AG04449 (cell line): ENCODE measurements at regions of chr6 and their contacts with region 1.

Region 1: DNA sequence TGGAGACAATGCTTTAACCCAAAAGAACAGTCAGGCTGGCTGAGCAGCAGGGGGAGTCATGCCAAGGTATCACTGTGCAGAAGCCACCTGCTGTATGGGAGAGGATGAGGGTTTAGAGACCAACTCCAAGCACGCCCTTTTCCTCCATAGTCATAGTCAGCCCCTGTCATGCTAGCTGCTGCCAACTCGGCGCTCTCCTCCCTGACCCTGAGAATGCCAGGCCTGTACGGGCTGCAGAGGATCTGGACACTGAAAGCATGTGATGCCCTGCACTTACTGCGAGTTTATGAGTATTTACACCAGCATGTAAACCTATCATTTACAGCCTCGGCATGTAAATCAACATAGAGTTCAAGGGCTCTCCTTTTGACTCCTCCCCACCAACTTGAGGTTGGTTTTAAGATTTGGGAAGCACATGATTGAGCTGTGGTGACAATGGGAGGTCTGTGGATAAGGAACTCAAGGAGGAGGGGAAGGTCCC is 11.7 kb upstream of the SCUBE3 start:
- DNase-seq: no peak
- H3K4me3 ChIP-seq: no peak overlapping the region
- CTCF ChIP-seq: no peak

Region 2: DNA sequence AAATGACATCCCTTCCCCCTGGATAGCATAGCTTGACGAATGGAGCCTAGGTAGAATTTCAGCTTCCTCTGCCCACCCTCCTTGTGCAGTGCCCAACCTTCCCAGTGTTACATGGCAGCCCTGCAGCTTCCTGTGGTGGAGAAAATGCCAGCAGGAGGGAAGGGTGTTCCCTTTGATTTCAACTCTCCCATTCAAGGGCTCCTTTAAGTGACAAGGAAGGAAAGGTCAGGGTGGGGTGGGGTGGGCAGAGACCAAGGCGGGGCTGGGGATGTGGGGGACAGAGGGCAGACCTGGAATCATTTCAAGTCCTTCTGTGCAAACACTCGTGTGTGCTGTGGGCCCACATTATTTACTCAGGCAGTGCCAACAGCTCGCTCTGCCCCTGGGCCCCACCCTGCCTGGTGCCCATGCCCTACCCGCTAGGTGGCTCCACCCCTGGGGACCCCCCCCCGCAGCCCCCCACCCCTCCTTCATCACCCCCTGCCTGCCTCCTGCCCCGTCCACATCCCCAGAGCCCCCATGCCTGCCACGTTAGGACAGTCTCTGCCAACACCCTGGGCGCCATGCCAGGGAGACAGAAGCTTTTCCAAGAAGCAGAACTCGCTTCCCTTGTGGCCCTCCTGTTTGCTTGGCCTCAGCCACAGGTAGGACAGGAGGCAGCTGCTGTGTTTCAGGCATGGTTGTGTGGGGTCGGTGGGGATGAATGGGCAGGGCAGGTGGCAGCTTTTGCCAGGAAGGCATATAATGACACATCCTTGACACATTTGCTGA is 655.4 kb before region 1 on chr6:
- CTCF ChIA-PET with region 1: no interaction called
- POLR2A ChIA-PET with region 1: no interaction called
- DNase-seq: no peak
- H3K4me3 ChIP-seq: no peak overlapping the region
- CTCF ChIP-seq: no peak

Region 3: DNA sequence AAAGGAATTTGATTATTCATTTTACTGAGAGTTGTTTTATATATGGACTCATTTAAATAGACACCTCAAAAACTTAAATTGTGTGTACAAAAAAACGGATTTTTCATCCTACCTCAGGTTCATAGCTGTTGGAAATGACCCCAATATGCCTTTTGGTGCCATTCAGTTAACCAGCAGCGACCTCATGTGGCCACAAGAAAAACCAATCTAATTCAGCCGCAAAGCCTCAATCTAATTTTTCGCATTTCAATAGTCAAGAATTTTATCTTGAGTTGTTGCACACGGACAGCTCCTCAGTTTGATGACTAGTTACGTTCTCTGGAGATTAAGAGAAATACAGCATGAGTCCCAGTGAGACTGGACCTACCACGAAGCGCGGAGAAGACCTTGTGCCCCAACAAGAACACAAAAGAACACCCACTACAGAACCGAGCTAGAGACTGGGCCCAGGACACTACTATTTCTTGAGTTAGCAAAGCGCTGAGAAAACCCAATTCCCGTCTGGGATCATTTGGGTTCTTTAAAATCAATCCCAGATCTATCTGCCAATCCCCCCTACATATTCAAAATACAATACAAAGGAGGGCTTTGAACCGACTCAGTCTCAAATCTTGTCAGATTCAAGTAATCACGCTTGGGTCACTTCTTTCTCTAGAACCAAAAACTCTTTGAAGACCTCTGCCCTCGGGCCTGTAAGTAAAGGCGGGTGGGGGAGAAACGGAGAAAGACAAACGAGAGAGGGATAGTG is 62.0 kb before region 1 on chr6:
- CTCF ChIA-PET with region 1: interaction called, 179 read pairs
- POLR2A ChIA-PET with region 1: no interaction called
- DNase-seq: peak; percentile 41
- H3K4me3 ChIP-seq: no peak overlapping the region
- CTCF ChIP-seq: peak; percentile 58

Region 4: GRCh38 chr6:35165630-35166071 is 36.5 kb before region 1 on chr6:
- CTCF ChIA-PET with region 1: interaction called, 15 read pairs
- POLR2A ChIA-PET with region 1: no interaction called
- DNase-seq: no peak
- H3K4me3 ChIP-seq: no peak overlapping the region
- CTCF ChIP-seq: no peak

Region 5: GRCh38 chr6:35178932-35179832 is 22.9 kb before region 1 on chr6:
- CTCF ChIA-PET with region 1: interaction called, 14 read pairs
- POLR2A ChIA-PET with region 1: no interaction called
- DNase-seq: no peak
- H3K4me3 ChIP-seq: no peak overlapping the region
- CTCF ChIP-seq: no peak

Region 6: DNA sequence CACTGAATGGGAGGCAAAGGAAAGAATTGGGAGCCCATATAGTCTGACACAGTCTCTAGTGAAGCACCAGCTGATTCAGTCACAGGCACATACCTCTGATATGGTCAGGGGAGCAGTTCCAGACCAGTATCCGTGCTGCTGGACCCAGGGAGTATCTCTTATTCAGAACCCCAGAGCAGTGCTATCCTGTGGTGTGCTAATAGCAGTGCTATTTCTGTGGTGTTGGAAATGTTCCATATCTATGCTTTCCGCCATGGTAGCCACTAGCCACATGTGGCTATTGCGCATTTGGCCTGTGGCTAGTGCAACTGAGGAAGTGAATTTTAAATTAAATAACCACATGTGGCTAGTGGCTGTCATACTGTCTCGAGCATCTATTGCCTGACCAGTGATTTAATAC is 22.6 kb after region 1 on chr6:
- CTCF ChIA-PET with region 1: interaction called, 41 read pairs
- POLR2A ChIA-PET with region 1: no interaction called
- DNase-seq: no peak
- H3K4me3 ChIP-seq: no peak overlapping the region
- CTCF ChIP-seq: no peak

Region 7: DNA sequence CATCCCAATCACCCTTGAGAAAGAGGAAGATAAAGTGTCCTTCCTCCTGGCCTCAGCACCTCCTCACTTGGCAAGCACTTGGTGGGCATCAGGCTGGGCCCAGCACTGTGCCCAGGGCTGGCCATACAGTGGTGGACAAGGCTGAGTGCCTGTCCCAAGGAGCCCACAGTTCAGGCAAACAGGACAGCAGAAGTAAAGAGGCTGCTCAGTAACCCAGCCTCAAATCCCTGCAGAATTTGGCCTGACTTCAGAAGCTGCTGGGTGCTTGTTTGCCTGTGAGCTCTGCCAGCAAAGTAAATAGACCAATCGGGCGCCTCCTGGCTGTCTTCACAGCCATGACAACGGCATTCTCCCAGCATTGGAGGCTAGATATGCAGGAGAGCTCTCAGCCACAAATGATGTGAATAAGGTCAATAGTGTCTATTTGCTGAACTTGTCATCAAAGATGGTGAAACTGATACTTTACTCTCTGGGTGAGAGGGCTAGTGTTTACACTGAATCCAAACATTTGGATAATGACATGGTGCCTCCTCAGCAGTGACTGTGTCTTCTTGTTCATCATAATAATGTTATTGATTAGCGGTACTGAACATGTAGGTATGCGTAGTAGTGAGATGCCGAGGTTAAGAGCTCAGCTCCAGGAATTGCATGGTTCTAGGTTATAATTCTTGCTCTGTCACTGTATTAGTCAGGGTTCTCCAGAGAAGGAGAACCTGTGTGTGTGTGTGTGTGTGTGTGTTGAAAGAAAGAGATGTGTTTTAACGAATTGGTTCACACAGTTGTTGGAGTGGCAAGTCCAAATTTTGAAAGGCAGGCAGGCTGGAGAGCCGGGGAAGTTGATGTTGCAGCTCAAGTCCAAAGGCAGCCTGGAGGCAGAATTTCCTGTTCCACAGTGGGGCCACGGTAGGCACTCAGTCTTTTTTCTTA is 213.2 kb after region 1 on chr6:
- CTCF ChIA-PET with region 1: no interaction called
- POLR2A ChIA-PET with region 1: no interaction called
- DNase-seq: peak; percentile 69
- H3K4me3 ChIP-seq: no peak overlapping the region
- CTCF ChIP-seq: peak; percentile 68